ENCODE measurements at regions of chr1 and their contacts with region 1.

Region 1: DNA sequence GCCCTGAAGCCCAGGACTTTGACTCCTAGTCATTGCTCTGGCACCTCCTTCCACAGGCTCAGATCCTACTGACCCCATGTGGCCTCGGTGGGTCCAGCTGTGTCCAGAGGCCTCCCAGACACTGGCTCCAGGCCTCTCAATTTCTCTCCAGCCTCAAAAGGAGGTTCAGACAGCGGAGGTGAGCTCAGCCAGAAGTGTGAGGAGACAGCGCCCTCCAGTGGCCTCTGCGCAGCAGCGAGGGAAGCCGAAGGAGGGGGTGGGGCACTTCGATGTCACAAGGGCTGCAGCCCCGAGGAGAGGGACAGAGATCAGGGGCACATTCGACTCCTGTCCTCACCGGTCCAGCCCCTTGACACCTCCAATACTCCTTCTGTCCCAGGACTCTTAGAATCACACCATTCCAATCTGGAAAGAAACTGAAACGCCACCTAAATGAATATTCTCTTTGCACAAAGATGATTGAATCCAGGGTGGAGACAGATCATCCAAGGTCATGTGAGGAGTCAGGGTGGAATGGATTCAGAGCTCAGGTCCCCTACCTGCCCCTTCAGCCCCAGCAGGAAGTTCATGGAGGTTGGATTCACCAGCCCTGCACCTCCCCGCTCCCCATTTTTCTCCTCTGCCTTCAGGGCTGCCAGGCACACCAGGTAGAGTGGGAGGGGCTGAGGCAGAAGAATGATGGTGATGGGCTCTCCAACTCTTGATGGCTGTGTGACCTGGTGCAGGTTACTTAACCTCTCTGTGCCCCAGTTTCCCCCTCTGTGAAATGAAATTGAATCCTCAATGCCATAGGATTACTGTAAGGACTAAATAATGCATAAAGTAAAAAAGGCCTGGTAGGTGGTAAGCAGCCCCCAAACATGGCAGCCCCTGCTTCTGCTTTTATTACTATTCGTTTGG is 34.8 kb upstream of the ZBTB40 start:
- DNase-seq: peak; percentile 90
- ATAC-seq: peak; percentile 61
- H3K4me3 Mint-ChIP-seq: peak overlapping the region; percentile 42
- H3K27ac Mint-ChIP-seq: no peak overlapping the region
- H3K4me1 Mint-ChIP-seq: peaks cover 19% of the 10 kb centered on the region
- H3K27me3 Mint-ChIP-seq: no peaks in the 10 kb centered on the region
- CTCF ChIP-seq: peak; percentile 97

Region 2: DNA sequence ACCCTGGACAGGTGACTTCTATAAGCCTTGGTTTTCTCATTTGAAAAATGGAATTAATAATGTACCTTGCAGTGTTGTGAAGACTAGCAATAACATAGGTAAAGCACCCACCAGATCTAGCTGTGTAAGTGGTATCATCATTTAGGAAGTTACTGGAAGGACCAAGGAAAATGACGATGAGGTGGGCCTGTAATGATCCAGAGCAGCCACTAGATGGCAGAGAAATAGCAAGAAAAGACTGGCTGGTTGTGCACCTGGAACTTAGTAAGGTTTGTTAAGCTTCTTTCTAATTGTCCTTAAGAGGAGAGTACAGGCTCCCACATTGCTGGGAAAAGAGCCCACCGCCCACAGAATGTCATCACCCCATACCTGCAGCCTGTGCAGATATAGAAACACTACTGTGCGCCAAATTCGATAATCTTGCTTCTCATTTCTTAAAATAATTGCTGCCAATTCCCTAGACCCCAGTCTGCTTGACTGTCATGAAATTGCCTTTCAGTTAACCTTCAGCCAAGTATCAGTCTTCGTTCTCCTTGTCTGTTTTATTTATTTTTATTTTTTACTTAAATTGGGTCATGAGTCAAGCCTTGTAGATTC is 311.1 kb before region 1 on chr1:
- CTCF ChIA-PET with region 1: interaction called, 29 read pairs
- POLR2A ChIA-PET with region 1: no interaction called
- DNase-seq: no peak
- ATAC-seq: peak; percentile 60
- H3K4me3 Mint-ChIP-seq: no peak overlapping the region
- H3K27ac Mint-ChIP-seq: no peak overlapping the region; the same call in 1 of the 2 replicates
- H3K4me1 Mint-ChIP-seq: peaks cover 11% of the 10 kb centered on the region; the same call in 1 of the 2 replicates
- H3K27me3 Mint-ChIP-seq: no peaks in the 10 kb centered on the region
- CTCF ChIP-seq: peak; percentile 72

Region 3: GRCh38 chr1:22143065-22144036 is 273.5 kb before region 1 on chr1 and contains the start of gene WNT4:
- CTCF ChIA-PET with region 1: interaction called, 19 read pairs
- POLR2A ChIA-PET with region 1: no interaction called
- DNase-seq: peak; percentile 57
- ATAC-seq: peak; percentile 80
- H3K4me3 Mint-ChIP-seq: peak within 1 kb of the TSS; percentile 79
- H3K27ac Mint-ChIP-seq: no peak within 1 kb of the TSS
- H3K4me1 Mint-ChIP-seq: peaks cover 24% of the 10 kb centered on the region
- H3K27me3 Mint-ChIP-seq: peaks cover 40% of the 10 kb centered on the region
- CTCF ChIP-seq: peak; percentile 39; the same call in 1 of the 2 replicates
- total RNA-seq, gene WNT4: 0.69 to 0.85 TPM (median 0.70 TPM) in 3 replicates

Region 4: DNA sequence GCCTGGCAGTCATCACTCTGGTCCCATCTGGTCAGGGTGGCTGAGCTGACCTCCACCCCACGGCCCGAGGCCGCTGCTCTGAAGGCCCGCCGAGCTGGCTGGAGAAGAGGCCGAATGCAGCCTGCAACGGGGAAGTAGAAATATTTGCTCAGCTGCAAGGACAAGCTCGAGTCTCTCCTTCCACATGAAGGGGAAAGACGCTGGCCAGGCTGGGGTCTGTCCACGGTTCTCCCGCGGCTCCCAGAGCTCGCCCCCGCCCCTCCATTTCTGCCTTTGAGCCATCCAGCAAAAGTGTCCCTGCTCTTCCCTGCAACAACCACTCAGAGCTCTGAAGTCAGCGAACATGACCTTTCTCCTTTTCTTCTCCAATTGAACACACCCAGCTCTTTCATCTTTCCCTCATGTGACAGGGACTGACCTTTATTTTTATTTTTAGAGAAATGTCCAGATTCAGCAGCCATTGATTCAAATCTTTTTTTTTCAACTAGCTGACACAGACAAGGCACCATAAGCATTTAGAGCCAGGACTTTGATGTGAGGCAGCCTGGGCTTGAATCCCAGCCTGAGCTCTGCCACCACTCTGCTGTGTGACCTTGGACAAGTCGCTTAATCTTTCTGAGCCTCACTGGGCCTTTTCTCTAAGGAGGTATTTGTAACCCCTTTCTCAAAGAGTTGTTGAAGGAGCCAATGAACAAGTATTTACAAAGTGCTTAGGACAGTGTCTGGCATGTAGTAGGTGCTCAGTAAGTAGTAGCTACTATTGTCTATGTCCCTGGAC is 124.6 kb before region 1 on chr1:
- CTCF ChIA-PET with region 1: interaction called, 11 read pairs
- POLR2A ChIA-PET with region 1: no interaction called
- DNase-seq: no peak
- ATAC-seq: no peak
- H3K4me3 Mint-ChIP-seq: no peak overlapping the region
- H3K27ac Mint-ChIP-seq: no peak overlapping the region
- H3K4me1 Mint-ChIP-seq: peaks cover 7% of the 10 kb centered on the region; the same call in 1 of the 2 replicates
- H3K27me3 Mint-ChIP-seq: no peaks in the 10 kb centered on the region
- CTCF ChIP-seq: no peak

Region 5: DNA sequence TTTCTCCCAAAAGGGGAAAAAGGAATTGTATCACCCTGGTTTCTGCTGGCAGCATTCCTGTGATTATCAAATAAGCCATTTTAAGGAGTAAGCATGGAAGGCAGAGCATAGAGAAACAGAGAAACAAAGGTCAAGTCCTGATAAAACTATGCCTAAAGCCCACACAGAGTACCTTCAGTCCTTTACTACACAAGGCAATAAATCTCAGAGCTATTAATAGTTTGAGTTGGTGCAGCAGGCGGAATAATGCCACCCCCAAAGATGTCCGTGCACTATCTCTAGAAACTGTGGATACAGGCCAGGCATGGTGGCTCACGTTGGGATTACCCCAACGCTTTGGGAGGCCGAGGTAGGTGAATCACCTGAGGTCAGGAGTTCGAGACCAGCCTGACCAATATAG is 23.2 kb before region 1 on chr1:
- CTCF ChIA-PET with region 1: interaction called, 12 read pairs
- POLR2A ChIA-PET with region 1: no interaction called
- DNase-seq: no peak
- ATAC-seq: no peak
- H3K4me3 Mint-ChIP-seq: no peak overlapping the region
- H3K27ac Mint-ChIP-seq: no peak overlapping the region
- H3K4me1 Mint-ChIP-seq: peaks cover 31% of the 10 kb centered on the region
- H3K27me3 Mint-ChIP-seq: no peaks in the 10 kb centered on the region
- CTCF ChIP-seq: no peak

Region 6: DNA sequence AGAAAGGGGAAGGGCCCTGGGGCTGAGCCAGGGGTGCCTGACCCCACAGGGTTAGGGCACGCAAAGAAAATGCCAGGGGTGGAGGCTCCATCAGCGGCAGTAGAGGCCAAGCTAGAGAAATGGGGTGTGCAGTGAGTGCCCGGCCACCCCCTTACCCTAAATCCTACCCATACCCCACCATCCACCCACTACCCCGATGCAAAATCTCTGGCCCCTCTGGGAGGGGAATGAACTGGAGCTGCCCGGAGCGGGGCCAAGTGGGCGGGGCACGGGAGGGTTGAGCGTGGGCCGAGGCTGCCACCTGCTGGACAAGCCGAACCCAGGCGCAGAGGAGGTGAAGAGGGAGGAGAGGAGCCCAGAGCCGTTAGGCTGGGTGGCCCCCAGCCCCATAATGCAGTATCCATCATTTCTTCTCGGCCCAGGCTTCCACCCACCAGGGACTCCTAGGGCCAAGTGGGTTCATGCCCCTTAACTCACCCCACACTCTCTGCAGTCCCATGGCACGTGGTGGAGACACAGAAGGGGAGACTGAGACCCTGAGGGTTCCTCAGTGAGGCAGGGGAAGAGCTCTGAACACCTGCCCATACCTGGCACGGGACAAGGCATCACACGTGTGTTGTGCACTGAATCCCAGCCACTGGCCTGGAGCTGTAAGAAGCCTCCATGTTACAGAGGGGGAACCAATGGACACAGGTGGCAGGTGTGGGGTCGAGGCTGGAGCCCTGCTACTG is 225.3 kb after region 1 on chr1:
- CTCF ChIA-PET with region 1: interaction called, 31 read pairs
- POLR2A ChIA-PET with region 1: no interaction called
- DNase-seq: peak; percentile 90
- ATAC-seq: peak; percentile 80
- H3K4me3 Mint-ChIP-seq: no peak overlapping the region
- H3K27ac Mint-ChIP-seq: no peak overlapping the region
- H3K4me1 Mint-ChIP-seq: peaks cover 5% of the 10 kb centered on the region
- H3K27me3 Mint-ChIP-seq: 0 out of 2 replicates have a peak, but pooled peaks cover 4% of the 10 kb centered on the region
- CTCF ChIP-seq: peak; percentile 82